ENCODE measurements at regions of chr17 and their contacts with region 1.

Region 1: DNA sequence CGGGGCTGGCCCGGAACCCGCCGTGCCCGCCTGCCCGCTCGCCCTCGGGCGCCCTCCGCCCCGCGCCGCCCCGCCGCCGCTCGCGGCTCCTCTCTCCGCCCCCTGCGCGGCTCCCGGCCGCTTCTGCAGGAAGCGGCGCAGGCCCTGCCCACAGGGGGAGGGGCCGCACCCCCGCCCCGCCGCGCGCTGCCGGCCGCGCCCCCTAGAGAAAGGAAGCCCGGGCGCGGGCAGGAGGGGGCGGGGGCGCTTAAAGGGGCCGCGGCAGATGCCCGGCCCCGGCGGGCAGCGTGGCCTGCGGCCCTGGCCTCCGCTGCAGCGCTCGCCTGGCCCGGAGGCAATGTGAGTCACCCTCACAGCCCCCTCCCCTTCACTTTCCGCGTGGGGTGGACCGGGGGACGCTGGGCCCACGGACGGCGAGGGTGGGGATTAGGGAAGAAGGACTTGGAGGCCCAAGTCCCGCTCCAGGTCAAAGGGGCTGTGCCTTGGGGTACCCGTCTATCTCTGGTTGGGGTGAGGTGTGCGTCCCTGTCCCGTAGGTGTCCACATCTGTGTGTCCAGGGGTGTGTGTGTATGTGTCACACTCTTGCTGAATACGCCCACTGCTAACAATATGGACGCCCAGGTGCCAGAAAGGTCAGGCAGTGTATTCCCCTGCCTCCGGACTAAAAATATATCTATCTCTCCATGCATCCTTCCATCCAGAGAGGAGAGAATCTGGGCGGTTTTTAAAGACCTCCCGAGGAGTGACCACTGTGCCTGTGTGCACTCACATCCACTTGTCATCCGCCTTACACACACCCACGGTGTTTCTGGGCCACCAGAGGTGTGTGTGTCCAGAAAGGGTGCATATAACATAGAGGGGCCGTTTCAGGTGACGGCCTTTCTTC is at the start of gene GIT1:
- H3K4me3 ChIP-seq: peak within 1 kb of the TSS; percentile 86
- H3K27ac ChIP-seq: peak within 1 kb of the TSS; percentile 82
- H3K4me1 ChIP-seq: peaks cover 26% of the 10 kb centered on the region
- CTCF ChIP-seq: no peak

Region 2: GRCh38 chr17:29293890-29294579 is 295.7 kb before region 1 on chr17 and contains the start of gene NUFIP2:
- CTCF ChIA-PET with region 1: interaction called, 3 read pairs
- POLR2A ChIA-PET with region 1: interaction called, 22 read pairs
- H3K4me3 ChIP-seq: peak within 1 kb of the TSS; percentile 86
- H3K27ac ChIP-seq: peak within 1 kb of the TSS; percentile 99
- H3K4me1 ChIP-seq: peaks cover 11% of the 10 kb centered on the region
- CTCF ChIP-seq: no peak; the same call in 1 of the 2 replicates

Region 3: DNA sequence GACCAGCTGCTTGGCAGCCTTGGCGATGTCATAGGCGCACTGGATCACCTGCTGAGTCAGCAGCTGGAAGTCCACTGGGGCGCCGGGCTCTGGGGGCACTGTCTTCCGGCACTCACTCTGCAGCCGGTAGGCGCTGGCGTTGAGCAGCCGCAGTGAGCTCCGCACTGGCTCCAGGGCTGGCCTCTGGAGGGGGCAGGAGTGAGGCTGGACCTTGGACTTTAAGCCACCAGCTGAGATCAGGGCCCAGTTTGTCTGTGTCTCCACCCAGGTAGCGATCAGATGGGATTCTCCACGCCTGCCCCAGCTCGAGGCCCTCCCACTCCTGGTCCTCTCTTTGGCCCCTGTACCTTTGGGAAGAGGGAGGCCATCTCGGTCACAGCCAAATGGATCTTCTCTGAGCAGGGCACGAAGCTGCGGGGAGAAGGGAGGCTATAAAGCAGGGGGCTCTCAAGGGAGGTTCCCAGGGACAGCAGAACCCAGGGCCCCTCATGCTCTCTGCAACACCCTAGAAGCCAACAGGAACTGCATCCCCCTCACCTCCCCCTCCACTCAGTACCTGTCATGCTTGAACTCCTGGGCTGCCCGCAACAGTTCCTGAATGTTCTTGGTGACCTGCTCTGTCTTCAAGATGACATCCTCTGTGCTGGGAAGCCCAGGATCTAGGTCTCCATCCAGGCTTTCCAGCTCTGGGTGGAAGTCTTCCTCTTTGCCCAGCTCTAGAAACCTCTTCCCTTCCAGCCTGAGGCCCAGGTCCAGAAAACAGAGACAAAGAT is 14.8 kb before region 1 on chr17:
- CTCF ChIA-PET with region 1: interaction called, 74 read pairs
- POLR2A ChIA-PET with region 1: interaction called, 11 read pairs
- H3K4me3 ChIP-seq: no peak overlapping the region
- H3K27ac ChIP-seq: no peak overlapping the region
- H3K4me1 ChIP-seq: no peaks in the 10 kb centered on the region
- CTCF ChIP-seq: no peak

Region 4: DNA sequence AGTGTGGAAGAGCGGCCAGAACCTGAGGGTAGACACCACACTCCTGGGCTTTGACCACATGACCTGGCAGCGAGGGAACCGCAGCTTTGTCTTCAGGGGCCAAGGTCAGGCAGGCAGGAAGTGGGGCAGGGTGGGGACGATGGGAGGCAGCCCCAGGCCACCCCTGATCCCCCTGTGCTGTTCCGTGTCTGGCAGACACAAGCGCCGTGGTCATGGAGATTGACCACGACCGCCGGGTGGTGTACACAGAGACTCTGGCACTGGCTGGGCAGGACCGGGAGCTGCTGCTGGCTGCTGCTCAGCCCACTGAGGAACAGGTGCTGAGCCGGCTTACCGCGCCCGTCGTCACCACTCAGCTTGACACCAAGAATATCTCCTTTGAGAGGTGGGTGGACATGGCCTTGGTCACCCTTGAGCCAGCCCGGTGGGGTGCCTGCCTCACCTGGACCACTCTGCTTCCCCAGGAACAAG is 19.2 kb after region 1 on chr17:
- CTCF ChIA-PET with region 1: interaction called, 23 read pairs
- POLR2A ChIA-PET with region 1: interaction called, 3 read pairs
- H3K4me3 ChIP-seq: no peak overlapping the region
- H3K27ac ChIP-seq: no peak overlapping the region
- H3K4me1 ChIP-seq: no peaks in the 10 kb centered on the region
- CTCF ChIP-seq: no peak

Region 5: DNA sequence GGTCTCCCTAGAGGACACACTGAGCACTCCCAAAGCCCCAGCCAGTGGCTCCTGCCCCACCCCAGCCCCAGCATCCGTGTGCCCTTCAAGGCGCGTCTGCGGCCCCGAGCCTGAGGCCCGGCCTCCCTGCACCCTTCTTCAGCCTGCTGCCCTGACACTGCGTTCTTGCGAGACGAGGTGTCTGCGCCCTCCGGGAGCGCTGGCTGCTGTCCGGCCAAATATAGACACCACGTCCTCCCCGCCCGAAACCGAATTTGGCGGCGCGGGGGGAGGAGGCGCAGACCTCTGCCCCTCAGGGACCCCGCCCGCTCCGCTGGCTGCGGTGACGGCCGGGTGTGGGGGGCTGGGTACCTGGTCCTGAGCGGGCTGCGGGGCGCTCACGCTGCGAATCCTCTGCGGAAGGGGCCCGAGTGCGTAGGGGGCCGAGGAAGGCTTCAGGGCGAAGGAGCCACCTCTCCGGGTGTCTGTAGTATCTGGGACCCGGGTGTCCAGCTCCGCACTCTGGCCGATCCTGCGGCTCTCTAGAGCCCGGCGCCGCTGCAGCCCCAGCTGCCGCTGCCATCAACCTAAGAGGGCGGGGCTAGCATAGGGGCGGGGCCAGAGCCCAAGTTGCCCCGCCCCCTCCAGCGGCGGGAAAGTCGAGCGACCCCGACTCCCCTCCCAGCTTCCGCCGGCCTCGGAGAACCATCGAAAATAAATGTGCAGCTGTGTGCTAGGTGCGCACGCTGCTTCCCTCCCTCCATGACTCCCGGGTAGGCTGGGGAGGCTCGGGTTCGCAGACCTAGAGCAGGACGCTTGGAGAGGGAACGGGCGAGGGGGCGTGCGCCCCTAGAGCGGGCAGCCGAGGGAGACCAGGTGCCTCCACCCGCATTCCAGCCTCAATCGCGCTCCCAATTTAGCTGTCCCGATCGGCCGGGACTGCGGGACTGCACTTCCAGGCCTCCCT is 32.8 kb after region 1 on chr17 and contains the start of gene CORO6:
- CTCF ChIA-PET with region 1: interaction called, 11 read pairs
- POLR2A ChIA-PET with region 1: interaction called, 10 read pairs
- H3K4me3 ChIP-seq: peak within 1 kb of the TSS; percentile 75
- H3K27ac ChIP-seq: peak within 1 kb of the TSS; percentile 40; the same call in 1 of the 2 replicates
- H3K4me1 ChIP-seq: peaks cover 12% of the 10 kb centered on the region
- CTCF ChIP-seq: peak; percentile 19; the same call in 1 of the 2 replicates

Region 6: DNA sequence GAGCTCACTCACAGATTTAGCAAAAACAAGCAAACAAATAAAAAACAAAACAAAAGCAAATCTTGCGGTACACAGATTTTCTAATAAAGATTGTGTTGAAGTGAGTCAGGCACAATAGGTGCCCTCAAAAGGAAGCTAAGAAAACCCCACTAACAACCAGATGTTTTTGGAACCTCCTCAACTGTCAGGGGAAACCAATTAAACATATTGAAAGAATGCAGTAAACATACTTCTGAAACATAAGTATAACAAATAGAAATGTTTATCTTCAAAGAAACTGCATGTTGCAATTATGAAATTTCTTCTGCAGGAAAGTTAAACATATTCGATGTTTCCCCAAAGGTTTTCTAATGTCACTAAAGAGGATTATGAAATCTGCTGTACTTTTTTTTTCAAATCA is 143.4 kb after region 1 on chr17:
- CTCF ChIA-PET with region 1: no interaction called
- POLR2A ChIA-PET with region 1: no interaction called
- H3K4me3 ChIP-seq: no peak overlapping the region
- H3K27ac ChIP-seq: no peak overlapping the region
- H3K4me1 ChIP-seq: peaks cover 4% of the 10 kb centered on the region; the same call in 1 of the 2 replicates
- CTCF ChIP-seq: no peak

Measured in HEK293 (cell line).